ENCODE measurements at regions of chr6 and their contacts with region 1.

Region 1: DNA sequence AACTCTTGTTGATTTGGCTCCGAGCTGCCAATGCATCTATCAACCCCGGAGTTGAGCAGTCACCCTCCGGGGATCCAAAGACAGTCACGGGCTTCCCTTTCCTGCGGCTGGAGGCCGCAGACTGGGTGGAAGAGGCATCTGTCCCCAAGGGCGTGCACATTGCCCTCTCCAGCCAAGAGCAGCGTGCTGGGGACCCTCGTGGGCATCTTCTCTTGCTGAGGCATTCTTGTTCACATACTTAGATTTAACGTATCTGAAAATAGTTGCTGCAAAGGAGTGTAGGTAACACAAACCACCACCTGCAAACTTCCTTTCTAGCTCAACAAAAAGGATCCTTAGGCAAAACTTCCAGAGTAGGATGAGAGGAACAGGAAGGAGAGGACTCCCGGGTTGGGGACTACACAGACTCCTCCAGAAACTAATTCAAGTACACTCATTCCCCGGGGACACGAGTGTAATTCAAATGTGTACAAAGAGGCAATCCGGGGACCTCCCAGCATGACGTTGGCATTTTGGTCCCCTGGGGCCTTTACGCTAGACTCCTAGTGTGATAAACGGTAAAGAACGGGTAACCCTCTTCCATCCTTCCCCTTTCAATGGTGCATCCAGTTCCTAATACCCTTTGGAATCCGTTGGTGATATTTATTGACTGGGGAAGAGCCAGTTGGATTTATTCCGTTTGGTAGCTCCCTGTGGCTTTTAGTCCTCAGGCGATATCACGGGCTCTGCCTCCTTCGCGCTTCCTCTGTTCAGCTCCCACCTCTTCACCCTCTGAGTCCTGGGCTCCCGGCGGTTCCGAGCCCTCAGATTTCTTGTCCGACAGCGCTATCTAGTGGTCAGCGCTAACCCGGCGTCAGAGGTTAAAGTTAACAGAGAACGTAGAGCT is 2.7 kb upstream of the COL12A1 start:
- DNase-seq: no peak
- H3K4me3 ChIP-seq: peak overlapping the region; percentile 6
- CTCF ChIP-seq: peak; percentile 79

Region 2: DNA sequence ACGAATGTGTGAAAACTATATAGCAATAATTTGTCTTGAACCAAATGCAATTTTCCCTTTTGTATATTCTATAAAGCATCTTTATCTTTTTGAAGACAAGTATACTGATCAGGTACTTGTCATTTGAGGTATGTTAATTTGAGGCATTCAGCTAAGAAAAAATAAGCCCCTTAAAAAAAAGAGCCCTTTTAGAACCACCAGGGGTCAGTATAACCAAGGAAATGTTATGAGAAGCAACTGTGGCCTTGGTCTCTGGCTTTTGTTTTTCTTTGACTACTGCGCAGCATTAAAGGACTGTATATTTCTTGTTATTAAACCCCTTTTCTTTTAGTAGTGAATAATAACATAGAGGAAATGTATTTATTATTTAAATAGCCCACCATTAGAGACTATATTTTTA is 1469.4 kb before region 1 on chr6:
- CTCF ChIA-PET with region 1: interaction called, 210 read pairs
- POLR2A ChIA-PET with region 1: no interaction called
- DNase-seq: no peak
- H3K4me3 ChIP-seq: no peak overlapping the region
- CTCF ChIP-seq: peak; percentile 39

Region 3: DNA sequence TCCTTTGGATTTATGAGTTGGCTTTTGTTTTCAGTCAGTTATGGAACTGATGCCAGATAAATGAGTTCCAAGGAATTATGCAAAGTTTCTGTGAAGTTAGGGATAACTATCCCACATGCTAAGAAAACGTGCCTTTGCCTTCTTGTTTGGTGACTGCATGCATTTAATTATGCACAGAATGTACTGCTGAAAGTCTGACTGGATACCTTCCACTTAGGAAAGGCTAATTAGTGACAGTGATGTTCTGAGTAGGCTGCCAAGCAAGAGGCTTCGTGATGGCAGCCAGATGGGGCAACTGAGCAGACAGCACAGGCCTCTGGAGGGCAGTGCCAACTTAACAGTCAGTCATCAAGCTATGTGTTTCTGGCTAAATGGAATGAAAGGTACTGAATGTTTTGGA is 1222.7 kb before region 1 on chr6:
- CTCF ChIA-PET with region 1: interaction called, 33 read pairs
- POLR2A ChIA-PET with region 1: no interaction called
- DNase-seq: peak; percentile 69
- H3K4me3 ChIP-seq: no peak overlapping the region
- CTCF ChIP-seq: peak; percentile 37

Region 4: DNA sequence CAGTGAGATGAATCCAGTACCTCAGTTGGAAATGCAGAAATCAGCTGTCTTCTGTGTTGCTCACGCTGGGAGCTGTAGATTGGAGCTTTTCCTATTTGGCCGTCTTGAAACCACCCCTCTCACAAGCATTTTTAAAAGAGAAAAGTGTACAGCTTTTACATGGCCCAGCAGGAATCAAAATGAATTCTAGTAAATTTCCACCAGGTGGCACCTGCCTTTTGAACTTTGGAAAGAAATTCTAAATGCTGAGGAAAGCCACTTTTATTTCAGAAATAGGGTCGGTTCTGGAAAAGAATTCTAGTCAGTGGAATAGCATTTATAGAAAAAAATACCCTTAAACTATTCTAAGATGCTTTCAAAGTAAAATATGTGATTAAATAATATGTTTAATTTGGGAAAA is 864.7 kb before region 1 on chr6:
- CTCF ChIA-PET with region 1: interaction called, 32 read pairs
- POLR2A ChIA-PET with region 1: no interaction called
- DNase-seq: no peak
- H3K4me3 ChIP-seq: no peak overlapping the region
- CTCF ChIP-seq: peak; percentile 9

Region 5: GRCh38 chr6:74891349-74891831 is 317.2 kb before region 1 on chr6:
- CTCF ChIA-PET with region 1: no interaction called
- POLR2A ChIA-PET with region 1: no interaction called
- DNase-seq: no peak
- H3K4me3 ChIP-seq: no peak overlapping the region
- CTCF ChIP-seq: no peak

Region 6: DNA sequence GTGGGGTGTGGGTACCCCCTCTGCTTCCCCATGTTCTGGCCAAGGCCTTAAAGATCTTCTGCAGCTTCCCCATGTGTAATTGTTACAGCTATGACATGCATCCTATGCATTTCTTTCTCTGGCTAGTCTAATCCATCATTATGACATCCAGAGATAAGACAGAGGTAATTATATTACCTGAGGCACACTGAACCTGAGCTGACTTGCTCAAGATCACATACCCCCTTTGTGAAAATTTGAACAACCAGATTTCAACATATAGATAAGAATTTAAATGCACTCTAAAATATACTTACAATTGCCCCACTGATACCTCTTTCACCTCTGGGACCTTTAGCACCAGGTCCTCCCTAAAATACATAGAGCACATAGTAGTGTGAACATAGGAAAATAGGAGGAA is 105.1 kb before region 1 on chr6:
- CTCF ChIA-PET with region 1: interaction called, 10 read pairs
- POLR2A ChIA-PET with region 1: no interaction called
- DNase-seq: no peak
- H3K4me3 ChIP-seq: no peak overlapping the region
- CTCF ChIP-seq: no peak

Measured in AG04449 (cell line).